Esophagus muscularis mucosa (tissue), 4 donors: ENCODE measurements at regions of chr4 and their contacts with region 1.

Region 1: DNA sequence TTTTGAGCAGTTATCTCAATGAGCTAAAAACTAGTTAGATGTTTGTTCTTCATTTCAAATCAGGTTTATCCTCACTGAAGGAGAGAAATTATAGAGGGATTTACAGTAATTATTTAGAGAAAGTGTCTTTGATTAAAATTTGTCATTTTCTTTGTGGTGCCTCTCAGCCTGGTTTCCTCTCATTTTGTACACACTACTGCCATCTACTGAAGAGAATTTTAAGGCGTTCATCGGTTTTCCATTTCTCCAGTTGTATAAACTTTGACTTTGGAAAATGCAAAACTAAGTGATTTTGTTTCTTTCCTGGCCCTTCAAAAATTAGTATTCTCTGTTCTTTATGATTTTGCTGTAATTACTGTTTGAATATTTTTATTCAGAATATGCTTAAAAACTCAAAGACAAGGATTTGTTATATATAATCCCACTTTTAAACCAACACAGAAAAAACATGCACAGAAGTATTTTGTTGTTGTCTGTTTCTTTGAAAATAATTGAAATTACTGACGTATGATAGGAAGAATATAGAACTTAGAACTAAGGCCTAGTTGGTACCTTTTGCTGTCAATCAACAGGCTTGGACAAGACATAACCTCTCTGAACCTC is 34.4 kb upstream of the ANXA3 start:
- DNase-seq: no peak
- H3K4me3 ChIP-seq: no peak overlapping the region
- H3K27ac ChIP-seq: no peak overlapping the region
- H3K4me1 ChIP-seq: peaks cover 0 to 14% (median 4%) of the 10 kb centered on the region in 4 donors
- H3K27me3 ChIP-seq: no peaks in the 10 kb centered on the region
- CTCF ChIP-seq: peak; percentile 56 to 62 (median 59)
- EP300 ChIP-seq: no peak
- POLR2A ChIP-seq: no peak

Region 2: GRCh38 chr4:77959566-77960338 is 557.4 kb before region 1 on chr4:
- intact Hi-C with region 1: loop called (anchors 5 kb)
- DNase-seq: no peak
- H3K4me3 ChIP-seq: peak overlapping the region in 2 of 4 donors; percentile 1 to 22
- H3K27ac ChIP-seq: no peak overlapping the region
- H3K4me1 ChIP-seq: peaks cover 0 to 4% (median 0%) of the 10 kb centered on the region in 4 donors
- H3K27me3 ChIP-seq: no peaks in the 10 kb centered on the region
- CTCF ChIP-seq: peak; percentile 50 to 64 (median 61)
- EP300 ChIP-seq: no peak
- POLR2A ChIP-seq: no peak

Region 3: GRCh38 chr4:78056265-78057129 is 460.7 kb before region 1 on chr4:
- intact Hi-C with region 1: loop called (anchors 5 kb)
- DNase-seq: no peak
- H3K4me3 ChIP-seq: peak overlapping the region; percentile 63 to 66 (median 64)
- H3K27ac ChIP-seq: peak overlapping the region; percentile 62 to 86 (median 75)
- H3K4me1 ChIP-seq: peaks cover 9 to 37% (median 34%) of the 10 kb centered on the region in 4 donors
- H3K27me3 ChIP-seq: peaks cover 0 to 19% (median 0%) of the 10 kb centered on the region in 4 donors
- CTCF ChIP-seq: no peak
- EP300 ChIP-seq: no peak
- POLR2A ChIP-seq: no peak